Activated CD4-positive, alpha-beta memory T cell treated with anti-CD3 and anti-CD28 coated beads for 36 hours (primary cell): ENCODE measurements at regions of chr22 and their contacts with region 1.

Region 1: DNA sequence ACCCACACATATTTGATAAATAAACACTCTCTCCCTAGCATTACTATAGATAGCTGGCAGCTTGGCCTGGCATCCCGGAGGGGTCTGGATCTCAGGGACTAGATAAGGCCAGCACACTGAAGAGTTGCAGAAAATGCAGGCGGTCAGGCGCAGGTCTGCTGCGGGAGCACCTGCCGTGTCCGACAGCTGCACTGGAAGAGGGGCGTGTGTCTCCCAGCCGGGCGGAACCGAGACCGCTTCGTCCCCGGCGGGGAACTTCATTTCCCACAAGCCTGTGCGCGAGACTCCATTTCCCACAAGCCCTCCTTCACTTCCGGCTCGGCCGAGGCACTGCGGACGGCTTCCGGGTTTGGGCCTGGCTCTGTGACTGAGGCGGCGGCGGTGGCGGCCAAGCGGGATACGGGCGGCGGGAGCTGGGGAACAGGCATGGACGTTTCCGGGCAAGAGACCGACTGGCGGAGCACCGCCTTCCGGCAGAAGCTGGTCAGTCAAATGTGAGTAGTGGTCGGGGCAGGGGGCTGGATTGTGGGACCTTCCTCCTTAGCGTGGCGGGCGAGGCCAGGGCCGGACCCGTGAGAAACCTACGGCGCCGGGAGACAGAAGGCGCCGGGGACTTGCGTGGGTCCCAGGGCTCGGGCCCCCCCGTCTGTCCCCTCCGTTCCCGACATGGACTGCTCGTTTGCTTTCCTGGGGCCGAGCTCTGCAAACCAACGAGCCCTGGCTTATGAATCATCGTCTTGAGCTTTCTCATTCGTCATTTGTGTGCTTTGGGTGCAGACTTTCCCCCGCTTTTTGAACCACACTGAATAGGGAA is at the start of gene MED15:
- DNase-seq: peak; percentile 94
- H3K4me3 Mint-ChIP-seq: peak within 1 kb of the TSS; percentile 91
- H3K27ac Mint-ChIP-seq: peak within 1 kb of the TSS; percentile 93
- H3K4me1 Mint-ChIP-seq: peaks cover 51% of the 10 kb centered on the region
- H3K27me3 Mint-ChIP-seq: no peaks in the 10 kb centered on the region
- total RNA-seq, gene MED15: 93.3 to 97.4 TPM

Region 2: DNA sequence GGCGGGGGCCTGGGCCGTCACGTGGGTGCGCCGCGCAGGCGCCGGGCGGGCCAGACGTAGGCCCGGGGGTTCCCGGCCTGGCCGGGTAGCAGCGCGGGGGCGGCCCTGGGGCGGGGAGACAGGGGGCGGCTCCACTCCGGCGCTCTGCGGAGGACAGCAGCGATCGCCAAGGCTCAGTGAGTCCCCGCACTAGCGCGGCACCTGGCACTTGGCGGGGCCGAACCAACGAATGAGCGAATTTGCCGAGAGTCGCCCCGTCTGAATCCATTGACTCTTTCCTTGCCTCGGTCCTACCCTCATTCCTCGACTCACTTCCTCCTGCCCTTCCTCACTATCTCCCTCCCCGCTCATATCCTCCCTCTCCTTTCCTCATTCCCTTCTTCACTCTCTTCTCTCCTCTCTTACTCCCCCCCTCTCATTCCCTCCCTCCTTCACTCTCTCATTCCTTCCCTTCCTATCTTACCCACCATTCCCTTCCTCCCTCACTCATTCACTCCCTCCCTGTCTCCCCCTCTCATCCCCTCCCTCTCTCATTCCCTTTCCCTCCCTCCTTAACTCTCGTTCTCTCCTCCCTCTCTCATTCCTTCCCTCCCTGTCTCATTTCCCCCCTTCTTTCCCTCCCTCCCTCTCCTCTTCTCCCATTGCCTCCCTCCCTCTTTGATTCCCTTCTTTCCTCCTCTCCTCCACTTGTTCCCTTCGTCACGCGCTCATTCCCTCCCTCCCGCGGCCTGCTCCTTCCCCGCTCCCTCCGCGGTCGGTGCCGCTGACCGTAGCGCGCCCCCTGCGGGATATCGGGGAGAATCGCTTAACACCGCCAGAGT is 11.4 kb before region 1 on chr22:
- CTCF ChIA-PET with region 1: interaction called, 9 read pairs
- POLR2A ChIA-PET with region 1: interaction called, 14 read pairs
- intact Hi-C with region 1: loop called (anchors 1 kb)
- DNase-seq: peak; percentile 95
- H3K4me3 Mint-ChIP-seq: peak overlapping the region; percentile 86
- H3K27ac Mint-ChIP-seq: peak overlapping the region; percentile 80
- H3K4me1 Mint-ChIP-seq: peaks cover 31% of the 10 kb centered on the region
- H3K27me3 Mint-ChIP-seq: no peaks in the 10 kb centered on the region

Region 3: GRCh38 chr22:20531315-20532201 is 24.1 kb after region 1 on chr22:
- CTCF ChIA-PET with region 1: interaction called, 5 read pairs
- POLR2A ChIA-PET with region 1: interaction called, 11 read pairs
- intact Hi-C with region 1: no loop called
- DNase-seq: no peak
- H3K4me3 Mint-ChIP-seq: no peak overlapping the region
- H3K27ac Mint-ChIP-seq: peak overlapping the region; percentile 28
- H3K4me1 Mint-ChIP-seq: peaks cover 65% of the 10 kb centered on the region
- H3K27me3 Mint-ChIP-seq: no peaks in the 10 kb centered on the region

Region 4: DNA sequence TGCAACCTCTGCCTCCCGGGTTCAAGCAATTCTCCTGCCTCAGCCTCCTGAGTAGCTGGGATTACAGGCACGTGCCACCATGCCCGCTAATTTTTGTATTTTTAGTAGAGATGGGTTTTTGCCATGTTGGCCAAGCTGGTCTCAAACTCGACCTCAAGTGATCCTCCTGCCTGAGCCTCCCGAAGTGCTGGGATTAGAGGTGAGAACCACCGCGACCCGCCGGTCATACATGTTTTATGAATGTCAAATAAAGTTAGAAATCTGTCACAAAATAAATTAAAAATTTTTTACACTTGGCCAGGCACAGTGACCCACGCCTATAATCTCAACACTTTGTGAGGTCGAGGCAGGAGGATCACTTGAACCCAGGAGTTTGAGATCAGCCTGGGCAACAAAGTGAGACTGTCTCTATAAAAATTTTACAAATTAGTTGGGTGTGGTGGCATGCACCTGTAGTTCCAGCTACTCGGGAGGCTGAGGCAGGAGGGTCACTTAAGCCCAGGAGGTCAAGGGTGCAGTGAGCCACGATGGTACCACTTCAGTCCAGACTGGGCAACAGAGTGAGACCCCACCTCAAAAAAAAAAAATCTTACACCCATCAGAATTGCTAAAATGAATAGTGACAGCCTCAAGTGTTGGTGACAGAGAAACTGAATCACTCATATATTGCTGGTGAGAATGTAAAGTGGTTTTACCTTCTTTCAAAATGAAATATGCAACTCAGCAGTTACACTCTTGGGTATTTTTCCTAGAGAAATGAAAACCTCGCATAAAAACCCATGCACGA is 55.2 kb after region 1 on chr22:
- CTCF ChIA-PET with region 1: interaction called, 41 read pairs
- POLR2A ChIA-PET with region 1: interaction called, 15 read pairs
- intact Hi-C with region 1: loop called (anchors 2 kb)
- DNase-seq: no peak
- H3K4me3 Mint-ChIP-seq: no peak overlapping the region
- H3K27ac Mint-ChIP-seq: peak overlapping the region; percentile 78
- H3K4me1 Mint-ChIP-seq: peaks cover 62% of the 10 kb centered on the region
- H3K27me3 Mint-ChIP-seq: no peaks in the 10 kb centered on the region

Region 5: GRCh38 chr22:20916983-20917810 is 409.7 kb after region 1 on chr22 and contains the start of gene CRKL:
- CTCF ChIA-PET with region 1: no interaction called
- POLR2A ChIA-PET with region 1: no interaction called
- intact Hi-C with region 1: loop called (anchors 10 kb)
- DNase-seq: peak; percentile 98
- H3K4me3 Mint-ChIP-seq: peak within 1 kb of the TSS; percentile 99
- H3K27ac Mint-ChIP-seq: peak within 1 kb of the TSS; percentile 88
- H3K4me1 Mint-ChIP-seq: peaks cover 28% of the 10 kb centered on the region
- H3K27me3 Mint-ChIP-seq: no peaks in the 10 kb centered on the region
- total RNA-seq, gene CRKL: 65.1 to 65.7 TPM